ENCODE measurements at regions of chr20 and their contacts with region 1.

Region 1: GRCh38 chr20:33359462-33359861 is 41.9 kb downstream of the CDK5RAP1 start:
- DNase-seq: no peak
- ATAC-seq: no peak
- H3K4me3 Mint-ChIP-seq: no peak overlapping the region
- H3K27ac Mint-ChIP-seq: no peak overlapping the region
- H3K4me1 Mint-ChIP-seq: no peaks in the 10 kb centered on the region
- H3K27me3 Mint-ChIP-seq: no peaks in the 10 kb centered on the region

Region 2: DNA sequence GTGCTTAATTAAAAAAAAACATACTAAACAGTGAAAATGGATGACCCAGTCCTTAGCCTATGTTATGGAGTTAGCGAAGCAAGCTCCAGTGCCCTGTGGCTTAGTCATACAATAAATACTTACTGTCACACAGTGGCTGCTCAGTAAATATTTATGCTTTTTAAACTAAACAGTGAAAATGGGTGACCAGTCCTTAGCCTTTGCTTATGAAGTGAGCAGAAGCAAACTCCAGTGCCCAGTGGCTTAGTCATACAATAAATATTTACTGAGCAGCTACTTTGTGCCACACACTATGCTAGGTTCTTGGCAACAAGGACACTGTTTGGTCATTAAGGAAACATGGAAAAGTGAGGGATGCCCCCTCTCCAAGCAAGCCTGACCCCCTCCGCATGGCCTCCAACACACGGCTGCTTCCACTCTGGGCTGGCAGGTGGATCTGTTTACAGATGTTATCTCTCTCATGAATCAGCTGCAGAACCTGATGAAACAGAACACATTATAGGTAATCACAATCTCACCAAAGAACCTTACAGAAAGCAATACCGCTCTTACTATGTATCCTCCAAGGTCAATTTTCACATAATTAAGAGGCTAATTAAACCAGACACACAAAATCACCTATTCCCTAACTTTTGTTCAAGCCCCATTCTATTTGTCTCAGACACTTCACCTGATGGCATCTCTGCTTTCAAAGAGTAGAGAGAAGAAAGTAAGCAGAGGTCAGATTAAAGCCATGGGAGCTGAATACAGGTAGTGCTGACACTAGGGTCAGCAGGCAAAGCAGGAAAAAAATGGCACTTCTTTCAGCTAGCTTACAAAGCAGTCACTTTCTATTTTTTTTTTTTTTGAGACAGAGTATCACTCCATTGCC is 14.5 kb after region 1 on chr20:
- CTCF ChIA-PET with region 1: interaction called, 3 read pairs
- POLR2A ChIA-PET with region 1: interaction called, 11 read pairs
- intact Hi-C with region 1: no loop called
- DNase-seq: no peak
- ATAC-seq: no peak
- H3K4me3 Mint-ChIP-seq: no peak overlapping the region
- H3K27ac Mint-ChIP-seq: no peak overlapping the region
- H3K4me1 Mint-ChIP-seq: peaks cover 41% of the 10 kb centered on the region
- H3K27me3 Mint-ChIP-seq: no peaks in the 10 kb centered on the region